Right lobe of liver (tissue), 6 donors: ENCODE measurements at regions of chr18 and their contacts with region 1.

Region 1: GRCh38 chr18:59725142-59725541 is 27.9 kb upstream of the CCBE1 start:
- DNase-seq: no peak
- ATAC-seq: no peak
- H3K4me3 ChIP-seq: no peak overlapping the region
- H3K27ac ChIP-seq: no peak overlapping the region
- H3K4me1 ChIP-seq: no peaks in the 10 kb centered on the region
- H3K27me3 ChIP-seq: no peaks in the 10 kb centered on the region
- CTCF ChIP-seq: no peak
- POLR2A ChIP-seq: no peak

Region 2: GRCh38 chr18:59498506-59499086 is 226.5 kb before region 1 on chr18:
- intact Hi-C with region 1: loop called in 1 of 2 experiments (anchors 5 kb)
- DNase-seq: no peak
- ATAC-seq: no peak
- H3K4me3 ChIP-seq: no peak overlapping the region
- H3K27ac ChIP-seq: no peak overlapping the region
- H3K4me1 ChIP-seq: no peaks in the 10 kb centered on the region
- H3K27me3 ChIP-seq: no peaks in the 10 kb centered on the region
- CTCF ChIP-seq: no peak
- POLR2A ChIP-seq: no peak

Region 3: DNA sequence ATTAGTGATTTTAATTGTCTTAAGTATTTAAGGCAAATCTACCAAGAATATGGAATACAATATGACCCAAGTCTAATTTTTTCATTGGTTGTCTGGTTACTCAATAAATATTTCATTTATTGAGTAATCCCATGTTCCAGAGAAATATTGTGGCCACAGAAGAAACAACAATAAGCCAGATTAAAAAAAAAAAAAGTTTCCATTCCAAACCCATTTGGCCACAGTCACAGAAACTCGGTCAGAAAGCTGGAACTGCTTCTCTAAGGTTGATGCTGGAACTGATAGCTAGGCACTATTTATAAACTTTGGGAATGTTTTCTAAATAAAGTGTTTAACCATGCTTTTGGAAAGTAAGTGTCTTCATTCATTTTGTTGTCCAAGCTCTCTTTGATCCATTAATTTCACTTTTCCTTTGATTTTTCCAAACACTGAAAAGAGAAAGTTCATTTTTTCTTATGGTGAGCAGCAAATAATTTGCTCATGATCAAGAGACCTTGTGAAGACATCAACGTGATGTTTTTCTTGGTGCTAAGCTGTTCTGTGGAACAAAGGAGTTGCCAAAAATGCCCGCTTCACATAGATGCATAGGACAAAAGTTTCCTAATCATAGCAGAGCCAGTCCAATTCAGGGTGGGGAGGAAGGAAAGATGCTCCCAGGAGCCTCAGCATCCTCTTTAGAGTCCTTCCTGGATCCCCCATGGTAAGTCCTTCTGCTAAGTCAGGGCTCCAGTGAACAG is 44.2 kb after region 1 on chr18:
- intact Hi-C with region 1: no loop called
- DNase-seq: no peak
- ATAC-seq: no peak
- H3K4me3 ChIP-seq: no peak overlapping the region
- H3K27ac ChIP-seq: no peak overlapping the region
- H3K4me1 ChIP-seq: no peaks in the 10 kb centered on the region
- H3K27me3 ChIP-seq: no peaks in the 10 kb centered on the region
- CTCF ChIP-seq: no peak
- POLR2A ChIP-seq: no peak